CD14-positive monocyte (primary cell): ENCODE measurements at regions of chr10 and their contacts with region 1.

Region 1: DNA sequence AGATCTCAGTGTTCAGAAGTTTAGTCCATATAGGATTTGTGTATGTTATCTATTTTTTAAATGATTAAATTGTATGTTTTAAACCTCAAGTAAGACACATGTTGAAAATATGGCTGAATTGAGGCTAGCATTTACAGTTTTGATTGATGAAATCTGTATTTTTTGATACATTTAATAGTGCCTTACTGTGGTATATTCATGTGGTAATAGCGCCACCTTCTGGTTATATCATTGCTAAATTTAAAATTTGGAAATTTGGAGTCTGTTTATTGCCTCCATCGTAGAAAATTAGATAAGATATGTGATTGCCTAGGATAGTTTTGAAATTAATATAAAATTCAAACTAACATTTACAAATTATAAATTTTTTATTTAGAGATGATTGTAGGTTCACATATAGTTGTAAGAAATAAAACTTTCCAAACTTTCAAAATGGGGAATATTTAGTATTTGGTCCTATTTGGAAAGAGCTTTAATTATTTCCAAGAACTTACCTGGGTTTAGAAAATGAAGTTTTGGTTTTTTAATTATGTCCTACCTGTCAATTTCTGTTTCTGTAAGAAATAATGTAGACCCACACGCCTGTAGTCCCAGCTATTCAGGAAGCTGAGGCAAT is 19.1 kb upstream of the ARMS2 start:
- DNase-seq: peak; percentile 18 to 54 (median 29)
- H3K4me3 ChIP-seq: no peak overlapping the region
- H3K4me3 Mint-ChIP-seq: no peak overlapping the region
- H3K27ac ChIP-seq: no peak overlapping the region
- H3K27ac Mint-ChIP-seq: no peak overlapping the region
- H3K4me1 ChIP-seq: no peaks in the 10 kb centered on the region
- H3K4me1 Mint-ChIP-seq: no peaks in the 10 kb centered on the region
- H3K27me3 ChIP-seq: no peaks in the 10 kb centered on the region
- H3K27me3 Mint-ChIP-seq: peaks cover 3 to 7% (median 3%) of the 10 kb centered on the region in 3 donors
- CTCF ChIP-seq: peak; percentile 84

Region 2: GRCh38 chr10:122298598-122299301 is 136.6 kb before region 1 on chr10:
- intact Hi-C with region 1: loop called (anchors 2 to 5 kb)
- DNase-seq: peak; percentile 21 to 45 (median 43)
- H3K4me3 ChIP-seq: no peak overlapping the region
- H3K4me3 Mint-ChIP-seq: no peak overlapping the region
- H3K27ac ChIP-seq: no peak overlapping the region
- H3K27ac Mint-ChIP-seq: no peak overlapping the region
- H3K4me1 ChIP-seq: no peaks in the 10 kb centered on the region
- H3K4me1 Mint-ChIP-seq: no peaks in the 10 kb centered on the region
- H3K27me3 ChIP-seq: no peaks in the 10 kb centered on the region
- H3K27me3 Mint-ChIP-seq: peaks cover 3 to 9% (median 8%) of the 10 kb centered on the region in 3 donors
- CTCF ChIP-seq: peak; percentile 81

Region 3: DNA sequence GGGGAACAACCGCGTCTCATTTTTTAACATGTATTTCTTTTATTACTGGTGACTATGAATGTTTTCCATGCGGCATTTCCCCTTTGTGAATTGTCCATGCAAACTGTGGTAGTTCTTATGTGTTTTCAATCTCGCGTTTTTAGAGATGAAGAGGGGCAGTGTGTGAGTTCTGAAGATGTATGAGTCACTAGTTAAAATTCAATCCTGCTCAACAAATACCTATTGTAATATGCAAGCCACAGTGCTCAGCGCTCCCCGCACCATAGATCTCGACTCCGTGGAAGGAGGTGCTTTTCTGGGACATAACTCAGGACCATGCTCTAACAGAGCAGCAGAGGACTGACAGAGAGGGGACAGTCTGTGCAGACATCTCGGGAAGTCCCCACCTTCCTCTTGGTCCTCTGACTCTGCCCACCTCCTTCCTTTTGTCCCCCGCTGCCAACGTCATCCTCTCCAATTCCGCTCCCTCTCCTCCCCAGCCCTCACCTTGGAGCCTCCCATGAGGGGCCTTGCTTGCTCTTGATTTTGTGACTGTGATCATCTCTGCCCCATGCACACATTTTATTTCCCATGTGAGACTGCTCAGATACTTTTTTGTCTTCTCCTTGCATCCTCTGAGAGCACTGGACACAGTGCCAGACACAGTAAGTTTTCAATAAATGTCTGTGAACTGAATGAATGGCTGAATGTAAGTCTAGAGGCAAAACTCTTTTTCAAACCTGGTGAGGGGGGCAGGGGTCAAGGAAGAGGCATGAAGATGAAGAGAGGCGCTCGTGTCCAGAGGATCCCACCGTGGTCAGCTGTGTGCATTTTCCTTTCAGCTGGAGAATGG is 103.5 kb before region 1 on chr10:
- intact Hi-C with region 1: loop called in 1 of 2 experiments (anchors 10 kb)
- DNase-seq: no peak
- H3K4me3 ChIP-seq: no peak overlapping the region
- H3K4me3 Mint-ChIP-seq: no peak overlapping the region
- H3K27ac ChIP-seq: no peak overlapping the region
- H3K27ac Mint-ChIP-seq: no peak overlapping the region
- H3K4me1 ChIP-seq: peaks cover 0 to 10% of the 10 kb centered on the region in 2 donors
- H3K4me1 Mint-ChIP-seq: peaks cover 10% of the 10 kb centered on the region
- H3K27me3 ChIP-seq: no peaks in the 10 kb centered on the region
- H3K27me3 Mint-ChIP-seq: peaks cover 4 to 27% (median 10%) of the 10 kb centered on the region in 3 donors
- CTCF ChIP-seq: no peak

Region 4: GRCh38 chr10:122342293-122343134 is 92.8 kb before region 1 on chr10:
- intact Hi-C with region 1: loop called (anchors 5 to 10 kb)
- DNase-seq: peak; percentile 5 to 14 (median 10)
- H3K4me3 ChIP-seq: no peak overlapping the region
- H3K4me3 Mint-ChIP-seq: no peak overlapping the region
- H3K27ac ChIP-seq: no peak overlapping the region
- H3K27ac Mint-ChIP-seq: no peak overlapping the region
- H3K4me1 ChIP-seq: peaks cover 0 to 3% of the 10 kb centered on the region in 2 donors
- H3K4me1 Mint-ChIP-seq: peaks cover 6% of the 10 kb centered on the region
- H3K27me3 ChIP-seq: no peaks in the 10 kb centered on the region
- H3K27me3 Mint-ChIP-seq: peaks cover 3 to 10% (median 3%) of the 10 kb centered on the region in 3 donors
- CTCF ChIP-seq: peak; percentile 70

Region 5: GRCh38 chr10:122446668-122447423 is 11.5 kb after region 1 on chr10:
- intact Hi-C with region 1: no loop called
- DNase-seq: no peak
- H3K4me3 ChIP-seq: no peak overlapping the region
- H3K4me3 Mint-ChIP-seq: peak overlapping the region in 1 of 2 donors; percentile 2
- H3K27ac ChIP-seq: no peak overlapping the region
- H3K27ac Mint-ChIP-seq: no peak overlapping the region
- H3K4me1 ChIP-seq: no peaks in the 10 kb centered on the region
- H3K4me1 Mint-ChIP-seq: peaks cover 1% of the 10 kb centered on the region
- H3K27me3 ChIP-seq: peaks cover 15 to 20% of the 10 kb centered on the region in 2 donors
- H3K27me3 Mint-ChIP-seq: peaks cover 19 to 39% (median 37%) of the 10 kb centered on the region in 3 donors
- CTCF ChIP-seq: no peak

Region 6: GRCh38 chr10:122565728-122566206 is 130.4 kb after region 1 on chr10:
- intact Hi-C with region 1: loop called (anchors 10 kb)
- DNase-seq: peak; percentile 13 to 44 (median 37)
- H3K4me3 ChIP-seq: no peak overlapping the region
- H3K4me3 Mint-ChIP-seq: no peak overlapping the region
- H3K27ac ChIP-seq: no peak overlapping the region
- H3K27ac Mint-ChIP-seq: no peak overlapping the region
- H3K4me1 ChIP-seq: no peaks in the 10 kb centered on the region
- H3K4me1 Mint-ChIP-seq: peaks cover 4% of the 10 kb centered on the region
- H3K27me3 ChIP-seq: peaks cover 12 to 17% of the 10 kb centered on the region in 2 donors
- H3K27me3 Mint-ChIP-seq: peaks cover 21 to 33% (median 21%) of the 10 kb centered on the region in 3 donors
- CTCF ChIP-seq: peak; percentile 77